Endothelial cell of umbilical vein (primary cell): ENCODE measurements at regions of chr22 and their contacts with region 1.

Region 1: GRCh38 chr22:35380547-35381423 is at the start of gene HMOX1:
- DNase-seq: peak; percentile 86
- H3K4me3 ChIP-seq: peak within 1 kb of the TSS; percentile 59 to 84 (median 82)
- H3K27ac ChIP-seq: peak within 1 kb of the TSS; percentile 57
- H3K4me1 ChIP-seq: peaks cover 34% of the 10 kb centered on the region
- H3K27me3 ChIP-seq: no peaks in the 10 kb centered on the region
- CTCF ChIP-seq: peak in 1 of 2 donors; percentile 14
- POLR2A ChIP-seq: peak; percentile 92
- total RNA-seq, gene HMOX1: 29.2 and 41.1 TPM in 2 replicates

Region 2: DNA sequence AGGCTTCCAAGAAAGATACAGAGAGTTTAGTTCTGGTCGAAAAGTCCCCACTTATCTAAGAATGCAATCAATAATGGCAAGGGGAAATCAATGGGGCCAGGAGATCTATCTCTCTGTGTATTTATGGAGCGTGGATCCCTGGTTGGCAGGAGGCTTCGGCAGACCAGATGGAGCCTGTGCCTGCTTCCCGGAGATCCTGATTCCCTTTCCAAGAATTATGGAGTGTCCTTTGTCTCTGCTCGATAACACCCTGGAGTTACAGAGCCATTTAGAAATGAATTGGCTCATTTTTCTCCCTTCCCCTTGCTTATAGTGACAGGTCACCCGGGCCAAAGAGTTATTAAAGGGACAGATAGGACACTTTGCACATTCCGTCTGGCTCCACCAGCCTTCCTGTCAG is 222.4 kb before region 1 on chr22:
- CTCF ChIA-PET with region 1: no interaction called
- POLR2A ChIA-PET with region 1: no interaction called
- dilution Hi-C with region 1: no loop called
- intact Hi-C with region 1: no loop called
- DNase-seq: no peak
- H3K4me3 ChIP-seq: no peak overlapping the region
- H3K27ac ChIP-seq: no peak overlapping the region
- H3K4me1 ChIP-seq: no peaks in the 10 kb centered on the region
- H3K27me3 ChIP-seq: peaks cover 0 to 2% of the 10 kb centered on the region in 2 experiments
- CTCF ChIP-seq: no peak
- POLR2A ChIP-seq: no peak

Region 3: GRCh38 chr22:35399678-35400334 is 19.0 kb after region 1 on chr22 and contains the start of gene MCM5:
- CTCF ChIA-PET with region 1: interaction called, 3 read pairs
- POLR2A ChIA-PET with region 1: no interaction called
- dilution Hi-C with region 1: no loop called
- intact Hi-C with region 1: loop called (anchors 2 kb)
- DNase-seq: peak; percentile 98
- H3K4me3 ChIP-seq: peak within 1 kb of the TSS; percentile 80 to 99 (median 89)
- H3K27ac ChIP-seq: peak within 1 kb of the TSS; percentile 82
- H3K4me1 ChIP-seq: peaks cover 17% of the 10 kb centered on the region
- H3K27me3 ChIP-seq: no peaks in the 10 kb centered on the region
- CTCF ChIP-seq: no peak
- POLR2A ChIP-seq: peak; percentile 67
- total RNA-seq, gene MCM5: 111 and 125 TPM in 2 replicates

Region 4: GRCh38 chr22:35601743-35602630 is 221.2 kb after region 1 on chr22:
- CTCF ChIA-PET with region 1: no interaction called
- POLR2A ChIA-PET with region 1: no interaction called
- dilution Hi-C with region 1: no loop called
- intact Hi-C with region 1: no loop called
- DNase-seq: no peak
- H3K4me3 ChIP-seq: no peak overlapping the region
- H3K27ac ChIP-seq: no peak overlapping the region
- H3K4me1 ChIP-seq: no peaks in the 10 kb centered on the region
- H3K27me3 ChIP-seq: peaks cover 0 to 9% of the 10 kb centered on the region in 2 experiments
- CTCF ChIP-seq: no peak
- POLR2A ChIP-seq: no peak